Endothelial cell of umbilical vein (primary cell): ENCODE measurements at regions of chr10 and their contacts with region 1.

Region 1: DNA sequence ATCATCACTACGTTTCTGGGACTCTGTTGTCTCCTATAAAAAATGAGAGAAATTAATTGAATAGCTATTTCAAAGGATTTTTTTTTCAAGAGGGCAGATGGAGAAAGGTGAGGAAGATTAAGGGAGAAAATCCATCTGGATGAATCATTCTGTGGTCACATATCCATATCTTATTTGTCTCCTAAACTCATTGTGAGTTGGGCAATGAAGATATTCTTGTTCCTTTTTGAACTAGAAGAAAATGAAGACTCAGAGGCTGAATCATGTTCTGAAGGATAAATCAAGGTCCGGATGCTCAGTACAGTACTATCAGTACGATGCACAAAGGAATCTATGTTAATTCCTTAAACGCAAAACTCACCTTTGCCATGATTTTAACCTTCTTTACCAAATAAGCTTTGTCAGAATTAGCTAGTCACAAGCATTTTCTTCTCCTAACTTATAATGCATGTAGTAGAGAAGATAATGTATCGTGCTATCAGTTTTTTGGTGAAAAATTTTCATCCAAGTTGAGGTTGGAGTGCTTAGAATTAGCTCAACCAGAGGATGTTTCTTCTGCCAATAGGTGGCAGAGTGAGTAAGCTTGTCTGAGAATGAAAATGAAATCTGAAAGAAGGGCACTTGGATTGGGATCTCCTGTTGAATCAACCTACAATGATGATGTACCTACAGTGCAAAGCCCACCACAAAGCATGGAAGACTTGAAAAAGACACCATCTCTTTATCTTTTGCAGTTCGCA is 446.9 kb downstream of the KIF20B start:
- DNase-seq: peak; percentile 39
- H3K4me3 ChIP-seq: no peak overlapping the region
- H3K27ac ChIP-seq: no peak overlapping the region
- H3K4me1 ChIP-seq: no peaks in the 10 kb centered on the region
- H3K27me3 ChIP-seq: peaks cover 0 to 1% of the 10 kb centered on the region in 2 experiments
- CTCF ChIP-seq: peak; percentile 28 to 54
- POLR2A ChIP-seq: no peak

Region 2: DNA sequence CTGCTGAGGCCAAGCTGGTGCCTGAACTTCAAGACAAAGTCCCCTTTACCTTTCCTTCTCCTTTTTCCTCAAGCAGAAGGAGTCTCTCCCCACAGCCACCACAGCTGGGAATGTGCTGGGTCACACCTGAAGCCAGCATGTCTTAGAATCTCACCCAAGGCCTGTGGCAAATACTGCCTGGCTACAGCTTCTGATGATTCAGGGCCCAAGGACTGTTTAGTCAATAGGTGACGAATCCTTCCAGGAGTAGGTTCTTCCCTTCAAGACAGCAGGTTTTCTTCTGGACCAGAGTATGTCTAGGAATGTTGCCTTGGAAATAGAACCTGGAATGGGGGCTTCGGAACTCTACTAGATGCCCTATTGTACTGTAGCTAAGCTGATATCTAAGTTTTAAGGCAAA is 72.3 kb before region 1 on chr10:
- CTCF ChIA-PET with region 1: no interaction called
- POLR2A ChIA-PET with region 1: no interaction called
- dilution Hi-C with region 1: no loop called
- intact Hi-C with region 1: no loop called
- DNase-seq: no peak
- H3K4me3 ChIP-seq: no peak overlapping the region
- H3K27ac ChIP-seq: no peak overlapping the region
- H3K4me1 ChIP-seq: no peaks in the 10 kb centered on the region
- H3K27me3 ChIP-seq: no peaks in the 10 kb centered on the region
- CTCF ChIP-seq: no peak
- POLR2A ChIP-seq: no peak

Region 3: DNA sequence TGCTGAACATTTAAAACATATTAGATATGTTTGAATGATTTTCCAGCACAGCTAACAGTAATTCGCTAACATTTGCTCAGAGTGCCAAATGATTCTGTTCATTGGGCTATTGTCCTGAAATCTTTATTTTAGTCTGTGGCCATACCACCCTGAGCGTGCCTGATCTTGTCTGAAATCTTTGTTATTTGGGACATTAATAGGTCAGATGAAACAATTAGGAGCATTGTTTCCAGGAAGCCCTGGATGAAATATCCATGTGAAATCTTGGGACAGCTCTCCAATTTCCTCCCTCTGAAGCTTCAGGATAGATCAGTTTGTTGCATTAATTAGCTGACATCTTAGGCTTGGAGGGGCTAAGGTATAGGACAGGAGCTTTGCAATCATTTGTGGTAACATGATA is 65.1 kb after region 1 on chr10:
- CTCF ChIA-PET with region 1: no interaction called
- POLR2A ChIA-PET with region 1: no interaction called
- dilution Hi-C with region 1: no loop called
- intact Hi-C with region 1: no loop called
- DNase-seq: no peak
- H3K4me3 ChIP-seq: no peak overlapping the region
- H3K27ac ChIP-seq: no peak overlapping the region
- H3K4me1 ChIP-seq: no peaks in the 10 kb centered on the region
- H3K27me3 ChIP-seq: peaks cover 0 to 4% of the 10 kb centered on the region in 2 experiments
- CTCF ChIP-seq: no peak
- POLR2A ChIP-seq: no peak

Region 4: DNA sequence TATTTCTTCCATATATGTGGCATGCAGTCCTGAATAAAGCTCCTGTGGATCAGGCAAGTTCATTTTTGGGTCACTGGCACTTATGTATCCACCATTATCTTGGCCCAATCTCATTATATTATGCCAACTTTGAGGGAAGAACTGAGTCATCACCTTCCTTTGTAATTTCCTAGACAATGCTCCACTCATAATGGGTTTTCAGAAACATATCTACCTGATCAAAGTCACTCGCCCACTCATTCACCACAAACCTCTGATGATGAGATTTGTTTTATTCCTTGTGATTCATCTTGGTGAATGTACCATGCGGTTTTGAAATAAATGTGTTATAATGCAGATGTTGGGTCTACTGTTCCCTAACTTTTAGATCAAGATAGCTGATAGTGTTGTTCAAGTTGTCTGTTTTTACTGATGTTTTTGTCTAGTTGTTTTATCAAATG is 79.0 kb after region 1 on chr10:
- CTCF ChIA-PET with region 1: interaction called, 4 read pairs
- POLR2A ChIA-PET with region 1: no interaction called
- dilution Hi-C with region 1: no loop called
- intact Hi-C with region 1: loop called (anchors 5 kb)
- DNase-seq: peak; percentile 88
- H3K4me3 ChIP-seq: no peak overlapping the region
- H3K27ac ChIP-seq: peak overlapping the region; percentile 66
- H3K4me1 ChIP-seq: peaks cover 26% of the 10 kb centered on the region
- H3K27me3 ChIP-seq: no peaks in the 10 kb centered on the region
- CTCF ChIP-seq: no peak
- POLR2A ChIP-seq: no peak

Region 5: GRCh38 chr10:90571481-90572258 is 423.4 kb after region 1 on chr10:
- CTCF ChIA-PET with region 1: interaction called, 12 read pairs
- POLR2A ChIA-PET with region 1: no interaction called
- dilution Hi-C with region 1: no loop called
- intact Hi-C with region 1: no loop called
- DNase-seq: no peak
- H3K4me3 ChIP-seq: no peak overlapping the region
- H3K27ac ChIP-seq: no peak overlapping the region
- H3K4me1 ChIP-seq: no peaks in the 10 kb centered on the region
- H3K27me3 ChIP-seq: no peaks in the 10 kb centered on the region
- CTCF ChIP-seq: no peak
- POLR2A ChIP-seq: no peak

Region 6: DNA sequence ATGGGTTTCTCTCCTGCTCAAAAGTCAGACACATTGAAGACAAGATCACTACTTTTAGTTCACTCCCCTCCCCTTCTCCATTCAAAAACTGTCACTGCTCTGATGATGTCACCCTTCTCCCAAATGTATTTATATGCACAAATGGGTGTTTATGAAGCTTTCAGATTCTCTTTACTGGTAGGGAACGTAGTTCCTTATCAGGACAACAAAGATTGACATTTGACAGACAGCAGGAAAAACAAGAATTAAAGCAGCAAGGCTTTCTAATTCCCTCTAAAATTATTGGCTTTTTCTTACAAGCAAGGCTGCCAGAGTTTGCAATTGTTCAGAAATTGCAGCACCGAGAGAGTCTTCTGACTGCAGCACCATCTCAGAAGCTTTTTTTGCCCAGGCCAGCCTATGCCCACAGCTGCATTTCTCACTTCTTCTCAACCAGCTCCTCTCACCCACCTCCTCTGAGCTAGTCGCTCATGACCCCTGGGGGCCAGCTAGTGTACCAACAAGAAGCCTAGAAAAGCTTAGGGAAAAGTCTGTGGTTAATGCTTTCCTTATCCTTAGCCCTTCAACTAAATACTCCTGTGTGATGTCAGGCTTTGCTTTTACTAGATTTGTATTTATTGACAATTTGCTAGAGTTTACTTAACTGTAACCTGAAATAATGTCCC is 444.5 kb after region 1 on chr10:
- CTCF ChIA-PET with region 1: interaction called, 145 read pairs
- POLR2A ChIA-PET with region 1: no interaction called
- dilution Hi-C with region 1: no loop called
- intact Hi-C with region 1: loop called (anchors 1 kb)
- DNase-seq: peak; percentile 55
- H3K4me3 ChIP-seq: no peak overlapping the region
- H3K27ac ChIP-seq: no peak overlapping the region
- H3K4me1 ChIP-seq: no peaks in the 10 kb centered on the region
- H3K27me3 ChIP-seq: peaks cover 6 to 10% of the 10 kb centered on the region in 2 experiments
- CTCF ChIP-seq: peak; percentile 61 to 72
- POLR2A ChIP-seq: no peak

Region 7: GRCh38 chr10:90658791-90659190 is 510.5 kb after region 1 on chr10:
- CTCF ChIA-PET with region 1: interaction called, 13 read pairs
- POLR2A ChIA-PET with region 1: no interaction called
- dilution Hi-C with region 1: no loop called
- intact Hi-C with region 1: loop called (anchors 2 kb)
- DNase-seq: no peak
- H3K4me3 ChIP-seq: no peak overlapping the region
- H3K27ac ChIP-seq: no peak overlapping the region
- H3K4me1 ChIP-seq: no peaks in the 10 kb centered on the region
- H3K27me3 ChIP-seq: no peaks in the 10 kb centered on the region
- CTCF ChIP-seq: peak in 1 of 2 donors; percentile 34
- POLR2A ChIP-seq: no peak

Region 8: GRCh38 chr10:90862908-90863514 is 714.7 kb after region 1 on chr10:
- CTCF ChIA-PET with region 1: interaction called, 6 read pairs
- POLR2A ChIA-PET with region 1: no interaction called
- dilution Hi-C with region 1: no loop called
- intact Hi-C with region 1: loop called (anchors 1 kb)
- DNase-seq: peak; percentile 49
- H3K4me3 ChIP-seq: no peak overlapping the region
- H3K27ac ChIP-seq: no peak overlapping the region
- H3K4me1 ChIP-seq: peaks cover 19% of the 10 kb centered on the region
- H3K27me3 ChIP-seq: peaks cover 24 to 43% of the 10 kb centered on the region in 2 experiments
- CTCF ChIP-seq: peak; percentile 57 to 62
- POLR2A ChIP-seq: no peak